Cardiac septum (tissue), 1 donor: ENCODE measurements at regions of chr11 and their contacts with region 1.

Region 1: GRCh38 chr11:88421530-88421929 is 84.0 kb upstream of the CTSC start:
- DNase-seq: no peak

Region 2: DNA sequence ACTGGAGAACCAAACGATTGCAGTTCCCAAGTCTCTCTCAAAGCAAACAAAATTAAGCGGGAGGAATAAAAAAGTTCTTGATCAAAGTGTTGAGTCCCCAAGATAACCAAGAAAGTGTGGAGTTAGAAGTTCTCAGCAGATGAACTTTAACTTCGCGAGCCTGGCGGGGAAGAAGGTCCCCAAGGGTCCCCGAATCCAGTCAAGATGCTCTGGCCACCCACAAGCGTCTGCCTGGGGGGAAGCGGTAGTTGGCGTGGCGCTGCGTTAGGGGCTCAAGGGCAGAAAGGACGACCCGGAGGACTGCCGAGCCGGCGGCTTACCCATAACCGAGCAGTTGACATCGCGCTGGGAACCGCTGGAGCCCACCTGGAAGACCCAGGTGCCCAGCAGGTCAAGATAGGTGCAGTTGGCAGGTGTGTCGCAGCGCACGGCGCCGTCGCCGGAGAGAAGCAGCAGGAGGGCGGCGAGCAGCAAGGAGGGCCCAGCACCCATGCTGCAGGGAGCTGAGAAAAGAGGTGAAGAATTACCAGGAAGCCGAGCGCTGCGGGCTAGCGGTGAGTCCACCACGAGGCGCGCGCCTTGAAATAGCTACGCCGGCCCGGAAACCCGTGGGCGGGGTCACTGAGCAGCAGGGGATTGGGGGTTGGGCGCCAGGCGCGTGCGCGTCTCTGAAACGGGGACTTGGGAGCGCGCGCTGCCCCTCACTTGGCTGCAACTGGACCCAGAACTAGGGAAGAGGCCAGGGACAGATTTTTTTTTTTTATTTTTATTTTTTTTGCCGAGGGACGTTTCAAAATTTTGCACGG is 84.1 kb before region 1 on chr11 and contains the start of gene CTSC:
- intact Hi-C with region 1: loop called (anchors 5 kb)
- DNase-seq: peak; percentile 97
- total RNA-seq, gene CTSC: 19.3 TPM

Region 3: DNA sequence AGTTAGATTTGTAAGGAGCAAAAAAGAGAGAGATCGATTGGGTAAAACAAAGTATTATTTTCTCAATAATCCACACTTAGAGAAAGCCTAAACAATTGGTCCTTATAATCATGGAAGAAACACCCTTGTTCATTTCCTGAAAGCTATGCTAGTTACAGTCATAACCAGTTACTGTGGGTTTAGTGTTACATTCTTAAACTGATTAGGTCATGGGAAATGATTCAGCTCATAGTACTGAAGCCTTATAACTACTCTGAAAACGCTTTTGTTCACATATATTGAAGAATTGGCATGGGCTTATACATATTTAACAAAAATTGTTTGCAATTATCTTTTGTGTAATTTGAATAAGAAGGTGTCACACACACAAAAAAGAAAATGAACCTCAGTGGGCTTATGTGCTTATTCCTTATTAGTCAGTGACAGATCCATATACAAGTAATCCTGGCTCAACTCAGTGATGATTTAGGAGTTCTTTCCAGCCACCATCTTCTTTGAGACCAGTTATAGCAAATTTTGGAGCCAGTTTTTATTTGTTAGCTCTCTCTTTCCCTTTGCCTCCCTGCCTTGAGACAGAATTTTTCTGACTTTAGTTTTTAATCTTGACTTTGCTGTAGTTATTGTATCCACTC is 114.5 kb after region 1 on chr11:
- intact Hi-C with region 1: loop called (anchors 10 kb)
- DNase-seq: no peak